ENCODE measurements at regions of chr3 and their contacts with region 1.

Region 1: GRCh38 chr3:115692887-115693524 is 69.7 kb downstream of the GAP43 start:
- DNase-seq: peak; percentile 48 to 64
- ATAC-seq: peak; percentile 93 to 97
- H3K4me3 ChIP-seq: no peak overlapping the region
- H3K27ac ChIP-seq: no peak overlapping the region
- H3K4me1 ChIP-seq: no peaks in the 10 kb centered on the region
- H3K27me3 ChIP-seq: no peaks in the 10 kb centered on the region
- CTCF ChIP-seq: peak; percentile 67 to 85 (median 79)
- POLR2A ChIP-seq: no peak

Region 2: GRCh38 chr3:114827495-114827894 is 865.5 kb before region 1 on chr3:
- in situ Hi-C with region 1: loop called in 1 of 4 experiments (anchors 25 kb)
- intact Hi-C with region 1: no loop called
- DNase-seq: no peak
- ATAC-seq: peak; percentile 44 to 68
- H3K4me3 ChIP-seq: no peak overlapping the region
- H3K27ac ChIP-seq: no peak overlapping the region
- H3K4me1 ChIP-seq: peaks cover 2 to 47% of the 10 kb centered on the region in 2 donors
- H3K27me3 ChIP-seq: no peaks in the 10 kb centered on the region
- CTCF ChIP-seq: peak; percentile 41 to 66 (median 57)
- POLR2A ChIP-seq: no peak

Region 3: DNA sequence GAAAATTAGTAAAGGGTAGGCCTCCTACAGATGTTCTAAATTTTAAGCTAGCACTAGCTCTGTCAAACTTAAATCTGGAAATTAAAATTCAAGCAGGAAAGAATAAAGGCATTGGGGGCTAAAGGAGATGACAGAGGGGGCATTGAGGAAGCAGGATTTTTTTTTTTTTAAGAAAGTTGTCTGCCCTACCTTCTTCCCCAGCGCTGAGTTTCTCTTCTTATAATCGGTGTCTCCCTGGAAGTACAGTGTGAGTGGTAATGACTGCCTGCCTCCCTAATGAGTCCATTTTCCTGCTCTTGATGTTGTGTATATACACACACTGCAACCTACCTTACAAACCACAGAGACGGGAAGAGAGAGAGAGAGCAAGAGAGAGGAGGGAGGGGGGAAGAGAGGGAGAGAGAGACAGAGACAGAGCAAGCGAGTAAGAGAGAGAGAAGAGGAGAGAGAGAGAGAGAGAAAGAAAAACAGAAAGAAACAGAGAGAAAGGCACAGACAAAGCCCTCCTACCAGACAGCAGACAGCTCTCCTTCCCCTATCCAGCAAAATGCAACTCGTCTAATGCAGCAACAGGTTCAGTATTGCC is 592.9 kb before region 1 on chr3:
- in situ Hi-C with region 1: no loop called
- intact Hi-C with region 1: loop called (anchors 2 kb)
- DNase-seq: no peak
- ATAC-seq: peak; percentile 84 to 86
- H3K4me3 ChIP-seq: peak overlapping the region; percentile 50 to 61 (median 55)
- H3K27ac ChIP-seq: peak overlapping the region; percentile 79 to 83 (median 82)
- H3K4me1 ChIP-seq: peaks cover 51 to 73% of the 10 kb centered on the region in 2 donors
- H3K27me3 ChIP-seq: no peaks in the 10 kb centered on the region
- CTCF ChIP-seq: no peak
- POLR2A ChIP-seq: peak in 1 of 2 donors; percentile 50

Region 4: GRCh38 chr3:115217678-115218451 is 475.1 kb before region 1 on chr3:
- in situ Hi-C with region 1: loop called (anchors 5 to 10 kb)
- intact Hi-C with region 1: loop called (anchors 1 kb)
- DNase-seq: no peak
- ATAC-seq: peak; percentile 82 to 84
- H3K4me3 ChIP-seq: no peak overlapping the region
- H3K27ac ChIP-seq: no peak overlapping the region
- H3K4me1 ChIP-seq: peaks cover 4 to 12% of the 10 kb centered on the region in 2 donors
- H3K27me3 ChIP-seq: no peaks in the 10 kb centered on the region
- CTCF ChIP-seq: peak; percentile 54 to 73 (median 63)
- POLR2A ChIP-seq: no peak

Region 5: GRCh38 chr3:115224687-115225086 is 468.3 kb before region 1 on chr3:
- in situ Hi-C with region 1: loop called (anchors 5 to 10 kb)
- intact Hi-C with region 1: no loop called
- DNase-seq: no peak
- ATAC-seq: no peak
- H3K4me3 ChIP-seq: no peak overlapping the region
- H3K27ac ChIP-seq: no peak overlapping the region
- H3K4me1 ChIP-seq: no peaks in the 10 kb centered on the region
- H3K27me3 ChIP-seq: no peaks in the 10 kb centered on the region
- CTCF ChIP-seq: no peak
- POLR2A ChIP-seq: no peak

Region 6: DNA sequence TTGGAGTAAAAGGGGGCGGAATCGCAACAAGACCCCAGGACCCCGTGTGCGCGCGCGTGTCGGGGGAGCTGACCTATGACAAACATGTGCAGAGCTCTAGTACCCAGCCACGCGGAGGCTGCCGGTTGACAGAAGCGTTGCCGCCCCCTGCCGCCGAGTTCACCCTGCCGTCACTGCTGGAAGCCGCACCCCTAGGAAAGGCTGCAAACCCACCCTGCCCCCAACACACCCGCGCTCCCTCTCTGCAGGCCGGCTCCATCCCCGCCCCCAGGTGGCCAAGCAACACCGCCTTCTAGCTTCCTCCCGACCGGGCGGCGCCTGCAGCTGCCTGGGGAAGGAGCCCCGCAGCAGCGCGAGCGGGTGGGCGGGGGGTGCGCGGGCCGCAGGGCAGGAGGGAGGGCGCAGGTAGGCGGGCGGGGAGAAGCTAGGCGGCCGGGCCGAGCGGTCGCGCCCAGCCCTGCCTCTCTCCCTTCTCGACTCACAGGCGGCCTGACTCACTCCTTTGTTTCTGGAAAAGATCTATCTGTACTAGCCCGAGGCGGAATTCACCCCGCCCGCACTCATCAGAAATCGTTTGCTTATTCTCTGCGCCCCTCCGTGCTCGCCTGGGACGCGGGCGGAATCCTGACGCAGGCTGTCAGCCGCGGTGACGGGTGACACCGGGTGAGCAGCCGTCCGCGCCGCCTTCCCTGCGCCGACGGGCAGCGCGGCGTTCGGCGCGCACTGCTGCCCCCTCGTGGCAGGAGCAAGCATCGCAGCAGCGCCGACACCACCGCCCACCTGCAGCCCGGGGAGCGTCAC is 91.1 kb after region 1 on chr3:
- in situ Hi-C with region 1: no loop called
- intact Hi-C with region 1: loop called (anchors 5 kb)
- DNase-seq: peak; percentile 70 to 88
- ATAC-seq: peak; percentile 90 to 92
- H3K4me3 ChIP-seq: peak overlapping the region; percentile 62 to 88 (median 73)
- H3K27ac ChIP-seq: peak overlapping the region; percentile 85 to 96 (median 91)
- H3K4me1 ChIP-seq: peaks cover 5 to 8% of the 10 kb centered on the region in 2 donors
- H3K27me3 ChIP-seq: no peaks in the 10 kb centered on the region
- CTCF ChIP-seq: peak; percentile 90 to 97 (median 95)
- POLR2A ChIP-seq: peak; percentile 31 to 35

Measured in gastrocnemius medialis (tissue), 4 donors.